ENCODE measurements at regions of chr3 and their contacts with region 1.

Region 1: DNA sequence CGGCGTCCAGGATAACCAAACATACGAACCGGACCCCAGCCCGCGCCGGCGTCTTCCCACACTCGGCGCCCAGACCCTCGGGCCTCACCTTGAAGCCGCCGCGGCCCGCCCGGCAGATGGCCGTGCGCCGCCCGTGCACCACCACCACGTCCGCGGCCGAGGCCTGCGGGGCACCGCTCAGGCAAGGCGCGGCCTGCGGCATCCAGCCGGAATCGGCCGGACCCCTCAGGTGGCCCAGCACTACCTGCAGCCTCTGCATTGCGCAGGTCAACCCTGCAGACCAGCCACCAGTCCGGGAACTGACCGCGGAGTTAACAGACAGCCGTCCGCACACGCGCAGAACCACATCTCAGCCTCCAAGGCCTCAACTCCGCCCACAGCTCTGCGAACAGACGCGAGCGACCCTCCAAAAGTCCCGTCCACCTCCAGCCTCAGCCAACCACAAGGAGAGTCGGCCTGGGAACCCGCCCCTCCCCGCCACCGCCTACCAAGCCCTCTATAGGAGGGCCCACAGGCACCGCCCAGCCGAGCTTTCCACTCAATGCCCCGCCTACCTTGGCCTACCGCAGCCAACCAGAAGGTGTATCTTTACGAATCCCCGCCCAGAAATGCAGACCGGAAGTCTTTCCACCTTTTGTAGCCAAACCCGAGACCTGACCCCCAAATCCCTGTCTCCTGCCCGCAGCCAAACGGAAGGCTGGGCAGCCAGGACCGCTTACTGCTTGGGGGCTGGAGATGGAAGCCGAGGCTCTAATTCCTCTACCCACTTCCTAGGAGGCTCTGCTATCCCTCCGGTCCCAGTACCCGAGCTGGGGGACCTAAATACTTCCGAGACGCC is at the start of gene ACAA1:
- DNase-seq: peak; percentile 96
- H3K4me3 Mint-ChIP-seq: peak within 1 kb of the TSS; percentile 94
- H3K27ac Mint-ChIP-seq: peak within 1 kb of the TSS; percentile 94
- H3K4me1 Mint-ChIP-seq: peaks cover 72% of the 10 kb centered on the region
- H3K27me3 Mint-ChIP-seq: no peaks in the 10 kb centered on the region
- total RNA-seq, gene ACAA1: 69.3 and 73.4 TPM in 2 replicates

Region 2: GRCh38 chr3:37580237-37580636 is 556.8 kb before region 1 on chr3:
- intact Hi-C with region 1: no loop called
- DNase-seq: no peak
- H3K4me3 Mint-ChIP-seq: no peak overlapping the region
- H3K27ac Mint-ChIP-seq: no peak overlapping the region
- H3K4me1 Mint-ChIP-seq: no peaks in the 10 kb centered on the region
- H3K27me3 Mint-ChIP-seq: no peaks in the 10 kb centered on the region

Region 3: DNA sequence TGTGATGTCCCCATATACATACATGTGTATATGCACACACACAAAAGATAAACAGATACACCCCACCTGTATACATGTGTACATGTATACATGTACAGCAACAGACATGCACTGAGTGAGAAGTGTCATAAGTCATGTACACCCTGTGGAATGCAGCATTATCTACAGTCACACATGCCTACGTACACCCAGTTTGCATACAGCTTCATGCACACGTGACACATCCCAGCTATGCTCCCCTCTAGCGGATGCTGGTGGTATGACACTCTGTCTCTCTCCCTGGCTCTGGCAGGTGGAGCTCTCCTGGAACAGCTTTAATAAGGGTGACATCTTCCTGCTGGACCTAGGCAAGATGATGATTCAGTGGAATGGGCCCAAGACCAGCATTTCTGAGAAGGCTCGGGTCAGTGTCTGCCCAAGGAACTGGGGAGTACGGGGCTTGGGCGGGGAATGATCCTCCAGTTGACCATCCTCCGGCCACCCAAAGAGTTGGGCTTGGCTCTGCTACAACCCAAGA is 140.2 kb before region 1 on chr3:
- intact Hi-C with region 1: loop called (anchors 1 kb)
- DNase-seq: peak; percentile 80
- H3K4me3 Mint-ChIP-seq: peak overlapping the region; percentile 9
- H3K27ac Mint-ChIP-seq: peak overlapping the region; percentile 70
- H3K4me1 Mint-ChIP-seq: peaks cover 61% of the 10 kb centered on the region
- H3K27me3 Mint-ChIP-seq: no peaks in the 10 kb centered on the region

Region 4: GRCh38 chr3:38164966-38165680 is 28.1 kb after region 1 on chr3 and contains the start of gene OXSR1:
- intact Hi-C with region 1: loop called (anchors 1 kb)
- DNase-seq: peak; percentile 96
- H3K4me3 Mint-ChIP-seq: peak within 1 kb of the TSS; percentile 98
- H3K27ac Mint-ChIP-seq: peak within 1 kb of the TSS; percentile 100
- H3K4me1 Mint-ChIP-seq: peaks cover 43% of the 10 kb centered on the region
- H3K27me3 Mint-ChIP-seq: no peaks in the 10 kb centered on the region
- total RNA-seq, gene OXSR1: 48.6 and 50.8 TPM in 2 replicates

Region 5: GRCh38 chr3:38186781-38187180 is 49.8 kb after region 1 on chr3:
- intact Hi-C with region 1: no loop called
- DNase-seq: no peak
- H3K4me3 Mint-ChIP-seq: no peak overlapping the region
- H3K27ac Mint-ChIP-seq: no peak overlapping the region
- H3K4me1 Mint-ChIP-seq: no peaks in the 10 kb centered on the region
- H3K27me3 Mint-ChIP-seq: no peaks in the 10 kb centered on the region

Region 6: DNA sequence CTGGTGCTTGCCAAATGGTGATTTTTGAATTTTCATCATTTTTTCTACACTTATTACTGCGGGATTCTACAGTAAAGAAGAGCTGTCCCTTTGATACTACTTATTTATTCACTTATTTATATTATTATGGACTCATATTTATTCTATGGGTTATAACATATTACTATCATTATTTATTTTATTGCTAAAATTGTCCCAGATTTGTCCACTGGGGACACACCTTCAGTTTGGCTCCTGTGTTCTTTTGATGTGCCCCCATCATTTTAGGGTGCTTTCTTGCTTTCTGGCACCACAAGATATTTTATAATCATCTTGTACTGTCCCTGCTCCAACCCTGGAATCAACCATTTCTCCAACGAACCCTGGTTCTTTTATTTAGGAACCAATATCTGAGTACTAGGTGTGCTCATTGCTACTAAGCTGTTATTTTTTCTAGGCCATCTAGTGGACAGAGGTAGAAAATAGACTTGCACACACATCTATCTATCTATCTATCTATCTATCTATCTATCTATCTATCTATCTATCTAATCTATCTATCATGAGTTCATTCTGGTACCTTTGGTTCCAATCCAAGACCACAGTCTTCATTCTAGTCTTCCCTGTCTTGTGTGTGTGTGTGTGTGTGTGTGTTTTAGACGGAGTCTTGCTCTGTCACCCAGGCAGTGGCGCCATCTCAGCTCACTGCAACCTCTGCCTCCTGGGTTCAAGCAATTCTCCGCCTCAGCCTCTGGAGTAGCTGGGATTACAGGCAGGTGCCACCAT is 161.1 kb after region 1 on chr3:
- intact Hi-C with region 1: loop called (anchors 5 kb)
- DNase-seq: no peak
- H3K4me3 Mint-ChIP-seq: no peak overlapping the region
- H3K27ac Mint-ChIP-seq: no peak overlapping the region
- H3K4me1 Mint-ChIP-seq: no peaks in the 10 kb centered on the region
- H3K27me3 Mint-ChIP-seq: peaks cover 21% of the 10 kb centered on the region

Region 7: GRCh38 chr3:38479431-38480092 is 342.6 kb after region 1 on chr3:
- intact Hi-C with region 1: loop called (anchors 5 kb)
- DNase-seq: peak; percentile 21
- H3K4me3 Mint-ChIP-seq: no peak overlapping the region
- H3K27ac Mint-ChIP-seq: no peak overlapping the region
- H3K4me1 Mint-ChIP-seq: no peaks in the 10 kb centered on the region
- H3K27me3 Mint-ChIP-seq: no peaks in the 10 kb centered on the region

Region 8: DNA sequence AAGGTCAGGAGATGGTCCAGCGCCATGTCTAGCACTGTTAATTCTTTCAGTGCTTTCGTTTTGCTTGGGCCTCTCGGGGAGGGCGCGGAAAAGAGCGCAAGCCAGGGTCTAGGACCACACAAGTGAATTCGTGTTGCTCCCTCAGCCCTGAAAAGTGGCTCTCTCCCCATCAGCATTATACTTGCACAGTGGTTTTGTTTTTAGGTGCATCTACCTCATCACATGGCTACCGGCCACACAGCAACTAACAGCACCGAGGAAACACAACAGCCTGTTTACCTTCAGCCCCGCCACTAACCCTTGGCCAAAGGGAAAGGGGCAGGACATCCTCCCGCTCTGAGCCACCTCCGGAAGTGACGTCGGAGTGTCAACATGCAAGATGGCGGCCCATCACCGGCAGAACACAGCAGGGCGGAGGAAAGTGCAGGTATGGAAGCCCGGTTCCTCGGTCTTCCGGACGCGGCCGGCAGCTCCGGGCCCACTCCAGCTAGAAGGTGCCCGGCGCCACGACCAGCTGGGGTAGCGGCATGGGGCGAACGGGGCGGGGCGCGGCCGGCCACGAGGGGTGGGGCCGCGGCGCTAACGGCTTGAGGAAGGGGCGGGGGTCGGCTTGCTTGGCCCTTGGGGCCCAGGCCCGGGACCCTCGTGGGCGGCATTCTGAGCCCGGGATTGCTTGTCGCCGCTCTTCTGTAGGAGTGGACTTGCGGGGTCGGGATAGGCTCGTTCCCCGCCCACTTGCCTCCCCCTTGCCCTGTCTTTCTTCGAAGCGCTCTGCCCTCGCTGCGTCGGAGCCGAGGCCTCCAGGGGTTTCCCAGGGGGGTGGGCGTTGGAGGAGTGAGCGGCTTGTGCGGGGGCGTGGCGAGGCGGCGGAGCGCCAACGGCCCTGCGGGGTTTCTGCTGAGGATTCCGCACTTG is 914.9 kb after region 1 on chr3 and contains the starts of genes SCN11A and WDR48:
- intact Hi-C with region 1: loop called (anchors 5 kb)
- DNase-seq: peak; percentile 91
- H3K4me3 Mint-ChIP-seq: peak within 1 kb of the TSS; percentile 93
- H3K27ac Mint-ChIP-seq: peak within 1 kb of the TSS; percentile 95
- H3K4me1 Mint-ChIP-seq: peaks cover 30% of the 10 kb centered on the region
- H3K27me3 Mint-ChIP-seq: no peaks in the 10 kb centered on the region
- total RNA-seq, gene SCN11A: 0.05 TPM in 1 of 2 replicates, not detected in the other
- total RNA-seq, gene WDR48: 40.6 and 41.5 TPM in 2 replicates